IMR-90 (cell line): ENCODE measurements at regions of chr4 and their contacts with region 1.

Region 1: DNA sequence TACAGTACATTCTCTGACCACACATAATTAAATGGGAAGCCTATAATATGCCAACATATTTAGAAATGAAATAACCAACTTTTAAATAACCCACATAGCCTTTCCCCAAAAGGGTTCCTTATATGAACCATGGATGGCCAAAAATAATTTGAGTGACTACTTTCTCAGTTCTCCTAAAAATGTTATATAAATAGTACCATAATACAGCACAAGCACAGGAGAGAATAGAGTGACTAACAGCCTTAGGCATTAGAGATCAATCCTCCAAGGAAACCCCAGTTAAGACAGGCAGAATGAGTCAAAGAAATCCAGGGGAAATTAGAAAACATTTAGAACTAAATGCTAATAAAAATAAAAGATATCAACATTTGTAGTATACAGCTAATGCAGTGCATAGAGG is 50.2 kb downstream of the ANKRD17 start:
- DNase-seq: peak; percentile 79
- ATAC-seq: peak; percentile 67; the same call in 1 of the 2 replicates
- H3K4me3 ChIP-seq: no peak overlapping the region
- H3K27ac ChIP-seq: no peak overlapping the region
- H3K4me1 ChIP-seq: 0 out of 2 replicates have a peak, but pooled peaks cover 2% of the 10 kb centered on the region
- H3K27me3 ChIP-seq: no peaks in the 10 kb centered on the region
- CTCF ChIP-seq: no peak
- POLR2A ChIP-seq: no peak
- RAD21 ChIP-seq: no peak

Region 2: DNA sequence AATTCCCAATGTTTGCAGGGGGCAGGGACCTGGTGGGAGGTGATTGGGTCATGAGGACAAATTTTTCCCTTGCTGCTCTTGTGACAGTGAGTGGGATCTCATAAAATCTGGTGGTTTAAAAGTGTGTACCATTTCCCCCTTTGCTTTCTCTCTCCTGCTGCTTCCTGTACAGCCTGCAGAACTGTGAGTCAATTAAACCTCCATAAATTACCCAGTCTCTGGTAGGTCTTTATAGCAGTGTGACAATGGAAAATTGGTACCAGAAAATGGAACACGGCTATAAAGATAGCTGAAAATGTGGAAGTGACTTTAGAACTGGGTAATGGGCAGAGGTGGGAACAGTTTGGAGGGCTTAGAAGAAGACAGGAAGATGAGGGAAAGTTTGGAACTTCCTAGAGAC is 1285.3 kb before region 1 on chr4:
- CTCF ChIA-PET with region 1: no interaction called
- POLR2A ChIA-PET with region 1: no interaction called
- dilution Hi-C with region 1: no loop called
- in situ Hi-C with region 1: no loop called
- intact Hi-C with region 1: no loop called
- DNase-seq: no peak
- ATAC-seq: no peak
- H3K4me3 ChIP-seq: no peak overlapping the region
- H3K27ac ChIP-seq: no peak overlapping the region
- H3K4me1 ChIP-seq: no peaks in the 10 kb centered on the region
- H3K27me3 ChIP-seq: no peaks in the 10 kb centered on the region
- CTCF ChIP-seq: no peak
- POLR2A ChIP-seq: no peak
- RAD21 ChIP-seq: no peak

Region 3: GRCh38 chr4:73244945-73245601 is 36.7 kb after region 1 on chr4:
- CTCF ChIA-PET with region 1: no interaction called
- POLR2A ChIA-PET with region 1: no interaction called
- dilution Hi-C with region 1: no loop called
- in situ Hi-C with region 1: no loop called
- intact Hi-C with region 1: loop called (anchors 5 kb)
- DNase-seq: no peak
- ATAC-seq: no peak
- H3K4me3 ChIP-seq: no peak overlapping the region
- H3K27ac ChIP-seq: no peak overlapping the region
- H3K4me1 ChIP-seq: no peaks in the 10 kb centered on the region
- H3K27me3 ChIP-seq: no peaks in the 10 kb centered on the region
- CTCF ChIP-seq: no peak
- POLR2A ChIP-seq: no peak
- RAD21 ChIP-seq: no peak